ENCODE measurements at regions of chr1 and their contacts with region 1.

Region 1: GRCh38 chr1:204162231-204163074 is 3.7 kb downstream of the REN start:
- DNase-seq: peak; percentile 91
- H3K4me3 ChIP-seq: peak overlapping the region in 1 of 2 experiments; percentile 20; a peak in 1 of 4 replicates
- H3K27ac ChIP-seq: no peak overlapping the region
- H3K4me1 ChIP-seq: no peaks in the 10 kb centered on the region; a peak in 1 of 4 replicates
- H3K27me3 ChIP-seq: no peaks in the 10 kb centered on the region; the same call in 1 of the 2 replicates
- CTCF ChIP-seq: peak; percentile 98
- EP300 ChIP-seq: no peak
- RAD21 ChIP-seq: peak; percentile 99

Region 2: GRCh38 chr1:204128964-204129896 is 33.2 kb before region 1 on chr1:
- CTCF ChIA-PET with region 1: interaction called, 24 read pairs
- POLR2A ChIA-PET with region 1: interaction called, 3 read pairs
- DNase-seq: peak; percentile 93
- H3K4me3 ChIP-seq: peak overlapping the region; percentile 4 to 39; a peak in 2 of 4 replicates
- H3K27ac ChIP-seq: peak overlapping the region in 1 of 2 experiments; percentile 93; a peak in 2 of 4 replicates
- H3K4me1 ChIP-seq: peaks cover 33 to 59% of the 10 kb centered on the region in 2 experiments
- H3K27me3 ChIP-seq: no peaks in the 10 kb centered on the region
- CTCF ChIP-seq: peak; percentile 83
- EP300 ChIP-seq: no peak
- RAD21 ChIP-seq: peak; percentile 73

Region 3: DNA sequence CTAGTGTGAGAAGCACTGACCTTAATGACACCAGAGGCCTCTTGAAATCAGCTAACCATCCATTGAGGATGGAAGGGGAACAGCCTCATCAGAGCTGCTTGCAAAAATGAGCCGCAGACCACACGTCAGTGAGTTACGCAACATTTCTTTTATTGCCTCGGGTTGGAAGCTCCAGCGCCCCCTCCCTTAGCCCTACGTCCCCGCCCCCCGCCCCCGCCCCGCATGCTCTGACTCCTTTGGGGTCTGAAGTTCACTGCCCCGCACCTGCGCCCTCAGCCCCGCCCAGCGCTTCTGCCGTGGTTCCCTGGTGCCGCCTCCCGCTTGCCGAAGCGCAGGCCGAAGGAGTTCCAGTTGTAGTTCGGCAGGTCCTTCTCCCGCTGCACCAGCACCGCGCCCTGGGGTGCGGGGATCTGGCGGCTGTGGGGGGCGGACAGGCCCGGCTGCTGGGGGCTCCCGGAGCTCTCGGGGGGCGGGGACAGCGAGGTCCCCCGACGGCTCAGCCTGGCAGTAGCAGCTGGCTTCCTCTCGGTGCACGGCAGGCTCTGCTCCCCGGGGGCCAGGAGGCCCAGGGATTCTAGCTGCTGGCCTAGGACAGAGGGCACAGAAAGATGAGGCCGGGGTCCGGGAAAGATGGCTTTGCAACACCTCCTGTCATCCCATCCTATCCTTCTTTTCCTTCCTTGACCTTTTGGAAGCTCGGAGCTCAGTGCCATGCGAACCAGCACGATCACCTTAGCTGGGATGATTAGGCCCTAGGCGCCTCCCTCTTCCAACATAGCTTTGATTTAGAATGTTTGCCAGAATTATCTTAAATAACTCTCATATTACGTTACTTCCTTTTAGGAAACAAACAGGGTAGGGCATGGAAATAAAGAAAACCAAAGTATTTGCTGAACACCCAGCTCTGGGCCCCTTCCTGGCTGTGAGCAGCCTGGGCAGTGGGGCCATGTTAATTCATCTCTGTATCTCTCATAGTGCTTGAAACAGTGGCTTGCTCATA is 28.1 kb after region 1 on chr1:
- CTCF ChIA-PET with region 1: interaction called, 35 read pairs
- POLR2A ChIA-PET with region 1: no interaction called
- DNase-seq: no peak
- H3K4me3 ChIP-seq: no peak overlapping the region
- H3K27ac ChIP-seq: no peak overlapping the region
- H3K4me1 ChIP-seq: peaks cover 0 to 4% of the 10 kb centered on the region in 2 experiments; a peak in 2 of 4 replicates
- H3K27me3 ChIP-seq: no peaks in the 10 kb centered on the region; the same call in 1 of the 2 replicates
- CTCF ChIP-seq: no peak
- EP300 ChIP-seq: no peak
- RAD21 ChIP-seq: no peak

Region 4: GRCh38 chr1:204257954-204258752 is 95.7 kb after region 1 on chr1:
- CTCF ChIA-PET with region 1: interaction called, 22 read pairs
- POLR2A ChIA-PET with region 1: no interaction called
- DNase-seq: peak; percentile 88
- H3K4me3 ChIP-seq: no peak overlapping the region
- H3K27ac ChIP-seq: peak overlapping the region in 1 of 2 experiments; percentile 67; a peak in 2 of 4 replicates
- H3K4me1 ChIP-seq: peaks cover 0 to 28% of the 10 kb centered on the region in 2 experiments; a peak in 2 of 4 replicates
- H3K27me3 ChIP-seq: no peaks in the 10 kb centered on the region; the same call in 1 of the 2 replicates
- CTCF ChIP-seq: peak; percentile 73
- EP300 ChIP-seq: no peak
- RAD21 ChIP-seq: peak; percentile 80

Region 5: GRCh38 chr1:204377795-204378608 is 215.5 kb after region 1 on chr1:
- CTCF ChIA-PET with region 1: interaction called, 15 read pairs
- POLR2A ChIA-PET with region 1: no interaction called
- DNase-seq: peak; percentile 81
- H3K4me3 ChIP-seq: peak overlapping the region; percentile 52 to 65
- H3K27ac ChIP-seq: no peak overlapping the region
- H3K4me1 ChIP-seq: peaks cover 0 to 20% of the 10 kb centered on the region in 2 experiments; a peak in 1 of 4 replicates
- H3K27me3 ChIP-seq: peaks cover 61% of the 10 kb centered on the region
- CTCF ChIP-seq: no peak
- EP300 ChIP-seq: no peak
- RAD21 ChIP-seq: no peak

Region 6: DNA sequence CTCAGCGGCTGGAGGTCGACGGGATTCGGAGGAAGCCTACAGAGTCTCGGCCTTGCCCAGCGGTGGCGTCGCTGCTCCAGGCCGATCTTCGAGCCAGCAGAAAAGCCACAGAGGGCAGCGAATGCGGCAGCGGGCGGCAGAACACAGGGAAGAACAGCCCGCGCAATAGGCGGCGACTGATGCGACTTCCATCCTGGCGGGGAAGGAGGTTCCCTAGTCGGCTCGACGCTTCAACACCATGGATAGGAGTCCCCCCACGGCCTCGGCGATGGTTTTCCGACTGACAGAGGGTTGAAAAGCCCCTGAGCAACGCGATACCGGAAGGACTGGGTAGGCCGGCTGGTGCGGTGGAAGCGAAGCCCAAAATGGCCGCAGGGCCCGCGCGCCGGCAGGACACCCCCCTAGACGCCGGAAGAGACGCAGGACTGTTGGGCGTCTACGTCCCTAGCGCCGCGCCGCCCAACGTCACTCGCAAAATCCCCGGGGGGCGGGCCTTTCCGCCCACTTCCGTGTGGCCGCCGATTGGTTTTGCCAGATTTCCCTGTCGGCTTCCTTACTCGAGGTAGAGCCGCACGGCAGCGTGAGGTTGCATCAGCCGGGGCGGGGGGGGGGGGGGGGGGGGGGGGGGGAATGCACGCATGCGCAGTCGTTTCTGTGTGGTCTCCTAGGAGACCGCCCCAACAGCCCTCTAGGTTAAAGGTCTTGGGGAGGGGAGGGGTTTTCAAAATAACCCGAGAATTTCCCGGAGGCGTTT is 249.2 kb after region 1 on chr1 and contains the start of gene PPP1R15B:
- CTCF ChIA-PET with region 1: interaction called, 14 read pairs
- POLR2A ChIA-PET with region 1: no interaction called
- DNase-seq: peak; percentile 93
- H3K4me3 ChIP-seq: peak within 1 kb of the TSS; percentile 78 to 89
- H3K27ac ChIP-seq: peak within 1 kb of the TSS; percentile 97 to 98
- H3K4me1 ChIP-seq: peaks cover 0 to 14% of the 10 kb centered on the region in 2 experiments; a peak in 2 of 4 replicates
- H3K27me3 ChIP-seq: no peaks in the 10 kb centered on the region
- CTCF ChIP-seq: no peak
- EP300 ChIP-seq: no peak; a peak in 1 of 4 replicates
- RAD21 ChIP-seq: no peak
- polyA plus RNA-seq, gene PPP1R15B: 12.1 and 14.3 TPM in 2 replicates

Region 7: GRCh38 chr1:204598319-204598969 is 436.0 kb after region 1 on chr1:
- CTCF ChIA-PET with region 1: no interaction called
- POLR2A ChIA-PET with region 1: no interaction called
- DNase-seq: no peak
- H3K4me3 ChIP-seq: no peak overlapping the region
- H3K27ac ChIP-seq: no peak overlapping the region
- H3K4me1 ChIP-seq: no peaks in the 10 kb centered on the region
- H3K27me3 ChIP-seq: no peaks in the 10 kb centered on the region; the same call in 1 of the 2 replicates
- CTCF ChIP-seq: no peak
- EP300 ChIP-seq: no peak
- RAD21 ChIP-seq: no peak